GM18951 (cell line): ENCODE measurements at regions of chr1 and their contacts with region 1.

Region 1: DNA sequence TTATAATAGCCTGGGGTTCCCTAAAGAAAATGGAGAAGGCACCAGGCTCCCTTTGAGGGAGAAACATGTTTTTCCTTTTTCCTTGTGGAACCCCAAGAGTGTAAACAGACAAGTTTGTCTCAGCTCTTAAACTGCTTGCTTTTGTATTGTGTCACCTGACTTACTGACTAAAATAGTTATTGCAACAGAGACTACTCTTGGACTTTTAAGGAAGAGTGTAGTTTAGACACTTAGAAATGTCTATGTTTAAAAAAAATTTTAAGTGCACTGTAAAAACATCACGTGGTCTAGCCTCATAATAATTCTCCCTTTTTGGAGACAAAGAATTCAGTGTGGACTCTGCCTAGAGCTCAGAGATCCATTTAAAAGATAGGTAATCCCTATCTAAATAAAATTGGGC is 141.1 kb downstream of the TRIM33 start:
- POLR2A ChIP-seq: no peak

Region 2: DNA sequence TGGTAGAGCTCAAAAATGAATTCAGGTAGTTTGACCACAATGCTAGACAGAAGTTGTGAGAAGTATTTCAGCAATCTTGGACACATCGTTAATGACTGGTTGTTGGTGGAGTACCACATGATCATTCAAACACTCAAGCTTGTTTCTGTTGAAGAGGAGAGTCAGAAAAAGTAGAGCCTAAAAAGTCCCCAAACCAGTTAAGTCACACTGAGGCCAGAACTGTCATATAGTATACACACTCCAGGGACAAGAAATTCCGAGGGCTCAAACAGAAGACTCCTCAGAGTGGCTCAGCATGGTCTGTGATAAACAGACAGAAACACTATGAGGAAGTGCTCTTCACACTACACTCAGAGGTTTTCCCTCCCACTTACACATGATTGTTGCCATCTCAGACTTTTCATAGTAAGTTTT is 135.2 kb after region 1 on chr1:
- in situ Hi-C with region 1: no loop called
- POLR2A ChIP-seq: no peak

Region 3: GRCh38 chr1:114531094-114531493 is 161.2 kb after region 1 on chr1:
- in situ Hi-C with region 1: loop called (anchors 10 kb)
- POLR2A ChIP-seq: no peak